ENCODE measurements at regions of chr2 and their contacts with region 1.

Region 1: GRCh38 chr2:42095923-42096408 is 48.1 kb downstream of the PKDCC start:
- DNase-seq: peak in 8 of 10 donors; percentile 51 to 94 (median 79)

Region 2: DNA sequence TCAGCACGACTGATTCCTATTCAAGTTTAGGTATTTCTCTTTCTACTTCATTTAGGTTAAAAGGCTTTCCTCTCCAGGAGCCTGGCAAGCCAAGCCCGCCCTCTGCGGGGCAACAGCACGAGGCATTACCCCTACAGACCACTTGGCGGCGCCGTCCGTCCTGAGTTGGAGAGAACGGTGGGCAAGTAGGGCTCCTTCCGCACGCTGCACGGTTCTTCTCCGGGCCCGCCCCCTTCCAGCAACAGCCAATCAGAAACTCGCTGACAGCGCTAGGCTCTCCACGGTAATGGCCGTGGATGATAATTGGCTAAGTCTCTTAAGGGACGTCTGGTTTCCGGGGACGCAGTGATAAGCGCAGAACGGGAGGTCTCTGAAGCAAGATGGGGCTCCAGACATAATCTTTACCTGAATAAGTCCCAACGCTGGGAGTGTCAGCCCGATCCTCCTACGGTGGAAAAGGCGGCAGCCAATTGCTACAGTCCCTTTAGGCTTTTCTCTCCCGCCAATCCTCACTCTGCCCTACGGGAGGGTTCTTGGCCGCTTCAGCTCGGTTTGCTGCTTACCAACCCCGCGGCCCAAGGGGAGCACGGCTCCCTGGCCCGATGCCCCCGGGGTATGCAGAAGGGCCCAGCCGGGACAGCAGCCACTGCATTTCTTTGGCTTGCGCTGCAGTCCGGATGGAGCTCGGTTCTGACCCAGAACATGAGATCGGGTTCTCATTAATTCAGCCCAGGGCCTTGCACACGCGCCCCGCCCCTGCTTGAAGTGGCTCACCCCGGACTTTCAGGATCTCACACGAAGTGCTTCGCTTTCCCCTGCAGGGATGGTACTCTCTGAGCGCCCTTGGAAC is 255.0 kb before region 1 on chr2:
- intact Hi-C with region 1: no loop called
- DNase-seq: peak; percentile 96 to 99 (median 98)

Region 3: DNA sequence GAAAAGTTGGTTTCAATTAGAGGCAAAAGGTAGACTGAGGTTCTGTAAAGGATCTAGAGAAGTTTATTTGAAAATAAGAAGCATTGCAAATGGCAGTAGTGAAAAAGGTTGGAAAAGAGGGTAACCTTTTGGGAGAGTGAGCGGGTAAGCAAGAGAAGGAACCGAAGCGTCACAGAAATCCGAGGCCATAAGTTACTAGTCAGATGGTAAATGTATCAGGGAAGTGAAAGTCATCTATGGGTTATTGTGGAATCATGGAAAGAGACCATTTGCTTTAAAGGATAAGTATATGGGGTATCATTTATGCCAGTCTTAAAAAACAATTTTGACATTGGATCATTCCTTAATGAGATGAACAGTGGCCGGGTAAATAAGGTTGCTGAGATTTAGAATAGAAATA is 103.7 kb after region 1 on chr2:
- intact Hi-C with region 1: loop called (anchors 2 kb)
- DNase-seq: no peak

Region 4: GRCh38 chr2:42238644-42239288 is 142.8 kb after region 1 on chr2:
- intact Hi-C with region 1: loop called (anchors 5 kb)
- DNase-seq: peak in 3 of 10 donors; percentile 10 to 81 (median 29)

Region 5: DNA sequence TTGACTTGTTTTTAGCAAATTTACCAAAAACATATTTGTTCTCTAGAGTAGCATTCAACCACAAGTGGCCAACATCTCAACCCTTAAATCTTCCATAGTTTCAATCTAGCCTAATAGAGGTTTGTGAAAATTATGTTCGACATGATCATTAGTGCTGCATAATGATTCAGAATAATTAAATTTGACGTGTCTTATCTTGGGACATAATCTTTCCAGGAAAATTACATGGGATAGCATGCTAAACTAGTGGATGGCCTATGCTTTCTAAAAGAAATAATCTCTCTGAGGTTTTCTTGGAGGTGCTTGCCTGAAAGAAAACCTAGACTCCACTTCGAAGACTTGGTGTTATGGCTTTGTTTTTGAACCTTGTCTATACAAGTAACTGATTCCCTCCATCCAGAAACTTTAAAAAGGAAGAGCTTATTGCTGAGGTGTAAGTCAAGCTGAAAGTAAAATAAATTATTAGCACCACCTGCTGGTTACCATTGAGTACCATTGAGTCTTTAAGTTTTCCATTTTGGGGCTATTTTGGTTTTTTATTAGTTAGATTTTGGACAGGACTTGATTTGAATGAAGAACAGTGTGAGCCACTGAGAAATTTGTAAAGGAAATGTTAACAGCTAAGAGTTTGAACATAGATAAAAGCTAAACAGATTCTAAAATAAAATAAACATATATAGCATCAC is 232.3 kb after region 1 on chr2:
- intact Hi-C with region 1: loop called (anchors 2 kb)
- DNase-seq: no peak

Region 6: GRCh38 chr2:42360890-42361727 is 265.1 kb after region 1 on chr2 and contains the start of gene COX7A2L:
- intact Hi-C with region 1: loop called (anchors 2 kb)
- DNase-seq: peak; percentile 96 to 100 (median 98)

Region 7: GRCh38 chr2:42722320-42723190 is 626.6 kb after region 1 on chr2:
- intact Hi-C with region 1: no loop called
- DNase-seq: peak in 2 of 10 donors; percentile 28 to 32

Measured in posterior cingulate gyrus (tissue), 11 donors.